Activated CD4-positive, alpha-beta T cell treated with anti-CD3 and anti-CD28 coated beads, Interleukin-2, amount 10 ng/mL, durations not matched to agents 24 days and 14 days (primary cell): ENCODE measurements at regions of chr19 and their contacts with region 1.

Region 1: DNA sequence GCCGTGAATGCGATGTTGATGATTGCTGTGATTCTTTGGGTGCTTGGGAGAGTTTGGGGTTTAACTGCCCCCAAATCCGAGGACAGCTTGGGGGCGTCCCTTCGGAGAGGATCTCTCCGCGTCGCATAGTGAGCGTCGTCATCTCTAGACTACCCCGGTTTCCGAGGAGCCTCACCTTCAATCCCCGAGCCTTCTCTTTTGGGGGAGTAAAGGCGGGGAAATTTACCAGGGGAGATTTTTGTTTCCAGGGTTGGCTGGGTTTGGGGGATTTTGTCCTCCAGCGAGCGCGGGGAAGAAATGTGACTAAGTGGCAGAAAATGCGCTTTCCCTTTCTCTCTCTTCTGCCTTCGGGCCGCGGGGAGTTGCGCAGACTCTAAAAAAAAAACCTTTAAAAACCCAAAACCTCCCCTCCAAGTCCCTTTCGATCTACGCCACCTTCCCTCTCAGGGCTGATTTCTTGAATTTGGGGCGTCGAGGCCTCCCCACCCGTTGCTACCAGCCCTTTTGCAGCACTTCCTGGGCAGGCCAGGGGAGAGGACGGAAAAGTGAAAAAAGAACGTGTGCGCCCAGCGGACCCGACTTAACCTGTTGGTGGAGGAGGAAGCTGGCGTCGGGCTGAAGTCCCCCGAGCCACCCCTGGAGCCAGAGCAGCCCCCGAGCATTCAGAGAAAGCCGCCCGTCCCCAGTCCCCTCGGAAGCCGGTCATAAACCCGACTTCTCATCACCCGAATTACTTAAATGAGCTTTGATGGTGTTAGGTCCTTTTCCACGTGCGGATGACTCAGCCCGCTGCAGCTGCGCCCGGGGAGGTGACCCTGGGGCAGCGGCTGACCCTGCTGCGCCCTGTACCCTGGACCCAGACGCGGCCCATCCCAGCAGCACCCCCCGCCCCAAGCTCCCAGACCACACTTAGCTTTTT is 17.7 kb downstream of the NFIX start:
- DNase-seq: peak; percentile 76
- H3K4me3 Mint-ChIP-seq: peak overlapping the region; percentile 76
- H3K27ac Mint-ChIP-seq: peak overlapping the region; percentile 67
- H3K4me1 Mint-ChIP-seq: peaks cover 15% of the 10 kb centered on the region
- H3K27me3 Mint-ChIP-seq: peaks cover 75% of the 10 kb centered on the region

Region 2: DNA sequence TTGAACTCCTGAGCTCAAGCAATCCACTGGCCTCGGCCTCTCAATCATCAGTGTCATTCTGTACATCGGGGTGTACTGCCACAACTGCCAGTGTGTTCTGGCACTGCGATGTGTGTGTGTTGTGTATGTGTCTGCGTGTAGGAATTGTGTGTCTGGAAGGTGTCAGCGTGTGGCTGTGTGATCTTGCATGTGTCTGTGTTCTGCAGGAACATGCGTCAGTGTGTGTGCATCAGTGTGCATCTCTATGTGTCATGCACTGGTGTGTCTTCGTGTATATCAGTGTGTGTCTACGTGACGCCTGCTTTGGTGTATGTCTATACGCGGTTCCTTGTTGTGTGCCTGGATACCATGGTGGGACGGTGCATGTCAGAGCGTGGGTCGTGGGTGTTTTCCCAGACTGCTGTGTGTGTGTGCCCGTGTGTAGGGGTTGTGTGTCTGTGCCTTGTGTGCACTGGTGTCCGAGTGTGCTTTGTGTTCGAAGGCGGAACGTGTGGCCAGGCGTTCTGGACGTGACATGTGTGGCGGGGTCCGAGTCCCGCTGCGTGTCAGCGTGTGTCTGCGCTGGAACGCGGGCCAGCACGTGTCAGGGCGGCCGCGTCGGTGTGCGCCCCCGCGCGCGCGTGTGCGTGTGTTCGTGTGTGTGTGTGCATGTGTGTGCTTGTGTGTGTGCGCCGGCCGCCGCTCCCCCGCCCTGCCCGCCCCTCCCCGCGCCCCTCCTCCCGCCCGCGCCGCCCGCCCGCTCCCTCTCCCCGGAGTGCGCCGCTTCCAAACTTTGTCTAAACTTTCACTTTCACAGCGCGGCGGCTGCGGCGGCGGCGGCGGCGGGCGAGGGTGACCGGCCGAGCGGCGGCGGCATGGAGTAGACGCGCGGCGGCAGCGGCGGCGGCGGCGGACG is 18.0 kb before region 1 on chr19 and contains the start of gene NFIX:
- intact Hi-C with region 1: loop called (anchors 2 kb)
- DNase-seq: peak; percentile 92
- H3K4me3 Mint-ChIP-seq: peak within 1 kb of the TSS; percentile 86
- H3K27ac Mint-ChIP-seq: peak within 1 kb of the TSS; percentile 80
- H3K4me1 Mint-ChIP-seq: peaks cover 6% of the 10 kb centered on the region
- H3K27me3 Mint-ChIP-seq: peaks cover 43% of the 10 kb centered on the region
- total RNA-seq, gene NFIX: 8.3 and 10.4 TPM in 2 replicates

Region 3: DNA sequence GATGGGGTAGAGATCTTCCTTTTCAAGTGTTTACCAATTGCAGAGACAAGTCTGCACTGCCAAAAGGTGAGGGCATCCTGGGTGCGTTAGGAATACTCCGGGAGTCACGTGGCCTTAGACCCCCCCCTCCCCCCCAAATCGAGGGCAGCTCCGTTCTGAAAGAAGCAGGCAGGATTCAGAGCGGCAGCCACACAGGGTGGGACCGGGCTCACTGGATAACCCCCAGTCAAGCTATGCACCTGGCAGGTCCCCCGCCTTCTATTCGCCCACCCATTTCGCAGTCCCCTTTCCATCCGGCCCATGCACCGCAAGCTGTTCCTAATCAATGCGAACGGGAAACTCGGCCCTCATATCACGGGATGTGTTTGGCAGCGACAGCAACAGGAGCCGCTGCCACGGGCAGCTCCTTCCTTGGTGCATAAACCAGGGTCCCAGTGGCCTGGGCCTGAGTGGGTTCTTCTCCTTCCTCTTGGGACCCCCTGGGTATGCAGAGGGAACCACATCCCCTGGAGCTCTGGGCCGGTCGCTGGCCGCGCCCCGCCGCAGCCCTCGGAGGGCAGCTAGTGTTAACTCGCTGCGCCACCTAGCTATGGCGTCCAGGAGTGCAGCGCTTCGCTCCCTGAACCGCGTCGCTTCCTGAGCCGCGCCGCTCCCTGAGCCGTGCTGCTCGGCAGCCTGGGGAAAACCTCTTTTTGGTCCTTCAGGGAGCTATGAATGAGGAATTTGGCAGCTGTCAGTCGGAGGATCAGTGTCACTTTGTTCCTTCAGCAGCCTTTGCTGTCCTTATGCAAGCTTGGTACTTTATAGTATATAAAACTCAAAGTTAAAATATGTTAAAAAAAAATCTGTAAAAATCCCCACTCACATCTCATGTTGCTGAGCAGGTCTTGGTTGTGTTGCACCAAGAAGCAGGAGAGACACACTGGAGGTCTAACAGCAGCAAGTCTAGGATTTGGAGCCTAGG is 48.3 kb after region 1 on chr19:
- intact Hi-C with region 1: no loop called
- DNase-seq: peak; percentile 94
- H3K4me3 Mint-ChIP-seq: peak overlapping the region; percentile 80
- H3K27ac Mint-ChIP-seq: no peak overlapping the region
- H3K4me1 Mint-ChIP-seq: peaks cover 5% of the 10 kb centered on the region
- H3K27me3 Mint-ChIP-seq: peaks cover 28% of the 10 kb centered on the region

Region 4: GRCh38 chr19:13099073-13099999 is 86.4 kb after region 1 on chr19:
- intact Hi-C with region 1: loop called (anchors 1 kb)
- DNase-seq: peak; percentile 94
- H3K4me3 Mint-ChIP-seq: peak overlapping the region; percentile 80
- H3K27ac Mint-ChIP-seq: peak overlapping the region; percentile 92
- H3K4me1 Mint-ChIP-seq: peaks cover 47% of the 10 kb centered on the region
- H3K27me3 Mint-ChIP-seq: peaks cover 24% of the 10 kb centered on the region

Region 5: GRCh38 chr19:13262450-13262849 is 249.5 kb after region 1 on chr19:
- intact Hi-C with region 1: no loop called
- DNase-seq: peak; percentile 74
- H3K4me3 Mint-ChIP-seq: no peak overlapping the region
- H3K27ac Mint-ChIP-seq: no peak overlapping the region
- H3K4me1 Mint-ChIP-seq: peaks cover 17% of the 10 kb centered on the region
- H3K27me3 Mint-ChIP-seq: peaks cover 22% of the 10 kb centered on the region